PC-9 (cell line): ENCODE measurements at regions of chr11 and their contacts with region 1.

Region 1: DNA sequence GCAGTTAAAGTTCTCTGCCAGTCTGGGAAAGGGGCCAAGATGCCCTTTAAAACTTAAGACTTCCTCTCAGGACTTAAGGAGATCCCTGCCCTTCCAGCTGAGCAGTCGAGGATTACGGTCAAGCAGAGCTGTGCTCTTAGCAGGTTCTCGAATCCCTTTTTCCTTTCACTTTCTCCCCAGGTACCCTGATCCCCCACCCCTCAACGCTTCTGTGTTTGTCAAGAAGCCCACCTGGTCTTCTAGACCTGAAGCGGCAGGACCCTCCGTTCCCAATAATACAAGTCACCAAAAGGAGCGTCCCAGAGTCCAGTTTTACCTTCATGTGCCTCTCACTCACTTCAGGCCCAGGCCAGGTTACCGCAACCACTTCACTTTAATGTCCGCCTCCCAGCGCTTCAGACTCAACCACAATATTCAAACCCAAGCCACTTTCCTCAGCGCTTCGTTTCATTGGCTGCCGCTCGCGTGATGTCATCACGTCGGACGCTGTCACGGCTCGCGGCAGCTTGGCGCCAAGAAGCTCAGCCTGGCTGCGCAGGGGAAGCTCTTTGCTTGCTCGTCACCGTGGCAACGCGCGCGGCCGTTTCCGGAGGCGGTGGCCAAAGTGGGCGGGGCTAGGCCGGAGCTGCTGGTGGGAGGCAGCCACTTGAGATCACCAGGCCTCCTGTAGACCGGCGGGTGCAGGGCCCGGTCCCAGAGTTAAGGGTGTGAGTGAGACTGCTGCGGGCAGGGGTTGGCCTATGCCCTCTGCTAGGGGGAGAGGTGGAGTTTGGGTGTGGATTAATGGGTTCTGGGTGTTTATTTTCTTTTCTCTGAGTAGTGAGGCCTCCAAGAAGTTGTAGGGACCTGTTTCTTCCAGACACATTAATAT is at the starts of genes KIF18A and METTL15:
- DNase-seq: peak; percentile 97 to 99
- H3K4me3 ChIP-seq: peak within 1 kb of the TSS; percentile 93
- H3K27ac ChIP-seq: peak within 1 kb of the TSS; percentile 61
- H3K4me1 ChIP-seq: peaks cover 48% of the 10 kb centered on the region
- H3K27me3 ChIP-seq: no peaks in the 10 kb centered on the region
- CTCF ChIP-seq: no peak
- total RNA-seq, gene KIF18A: 22.9 and 31.1 TPM in 2 replicates
- total RNA-seq, gene METTL15: 17.9 and 19.9 TPM in 2 replicates

Region 2: DNA sequence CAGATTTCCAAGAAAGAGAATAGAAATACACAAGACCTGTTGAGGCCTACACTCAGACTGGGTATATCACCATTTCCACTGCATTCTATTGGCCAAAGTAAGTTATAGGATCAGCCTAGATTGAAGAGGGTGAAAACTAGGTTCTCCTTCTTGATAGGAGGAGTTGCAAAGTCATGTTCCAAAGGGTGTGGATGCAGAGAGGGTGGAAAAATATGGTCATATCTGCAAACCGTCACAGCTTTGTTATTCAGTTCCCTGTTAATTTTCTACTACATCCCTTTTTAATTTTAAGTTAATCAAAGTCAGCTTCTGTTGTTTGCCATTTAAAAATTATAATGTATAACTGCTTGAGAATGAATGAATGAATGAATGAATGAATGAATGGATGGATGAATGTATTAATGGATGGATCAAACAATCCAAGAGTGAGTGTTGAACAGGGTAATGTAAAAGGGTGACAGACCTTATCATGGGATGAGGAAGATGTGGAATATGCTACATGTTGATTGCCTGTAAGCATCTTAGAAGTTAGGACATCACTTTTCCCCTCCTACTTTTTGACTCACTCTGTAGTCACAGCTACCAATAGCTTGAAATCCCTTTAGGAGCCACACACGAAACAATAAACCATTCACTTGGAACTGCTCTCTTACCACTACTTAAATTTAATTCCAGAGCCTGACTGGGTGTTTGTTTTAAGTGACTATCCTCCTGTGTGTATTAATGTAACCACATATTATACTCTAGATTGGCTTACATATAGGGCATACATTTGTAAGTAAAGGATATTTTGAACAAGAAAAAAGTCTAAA is 866.5 kb before region 1 on chr11:
- CTCF ChIA-PET with region 1: no interaction called
- POLR2A ChIA-PET with region 1: no interaction called
- intact Hi-C with region 1: no loop called
- DNase-seq: no peak
- H3K4me3 ChIP-seq: no peak overlapping the region
- H3K27ac ChIP-seq: no peak overlapping the region
- H3K4me1 ChIP-seq: no peaks in the 10 kb centered on the region
- H3K27me3 ChIP-seq: no peaks in the 10 kb centered on the region
- CTCF ChIP-seq: no peak

Region 3: GRCh38 chr11:27362749-27363575 is 745.0 kb before region 1 on chr11 and contains the start of gene CCDC34:
- CTCF ChIA-PET with region 1: no interaction called
- POLR2A ChIA-PET with region 1: interaction called, 10 read pairs
- intact Hi-C with region 1: no loop called
- DNase-seq: peak; percentile 80 to 90
- H3K4me3 ChIP-seq: peak within 1 kb of the TSS; percentile 75
- H3K27ac ChIP-seq: peak within 1 kb of the TSS; percentile 13; the same call in 1 of the 2 replicates
- H3K4me1 ChIP-seq: peaks cover 24% of the 10 kb centered on the region; the same call in 1 of the 2 replicates
- H3K27me3 ChIP-seq: no peaks in the 10 kb centered on the region
- CTCF ChIP-seq: no peak
- total RNA-seq, gene CCDC34: 21.0 and 33.6 TPM in 2 replicates

Region 4: DNA sequence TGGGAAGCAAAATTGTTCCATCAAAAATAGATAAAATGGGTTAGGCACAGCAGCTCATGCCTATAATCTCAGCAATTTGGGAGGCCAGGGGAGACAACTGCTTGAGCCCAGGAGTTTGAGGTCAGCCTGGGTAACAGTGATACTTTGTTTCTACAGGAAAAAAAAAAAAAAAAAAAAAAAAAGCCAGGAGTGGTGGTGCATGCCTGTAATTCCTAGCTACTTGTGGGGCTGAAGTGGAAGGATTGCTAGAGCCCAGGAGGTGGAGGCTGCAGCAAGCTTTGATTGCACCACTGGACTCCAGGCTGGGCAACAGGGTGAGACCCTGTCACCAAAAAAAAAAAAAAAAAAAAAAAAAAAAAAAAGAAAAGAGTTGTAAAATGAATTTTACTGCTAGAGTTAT is 49.6 kb before region 1 on chr11:
- CTCF ChIA-PET with region 1: no interaction called
- POLR2A ChIA-PET with region 1: interaction called, 10 read pairs
- intact Hi-C with region 1: no loop called
- DNase-seq: no peak
- H3K4me3 ChIP-seq: no peak overlapping the region
- H3K27ac ChIP-seq: no peak overlapping the region
- H3K4me1 ChIP-seq: no peaks in the 10 kb centered on the region
- H3K27me3 ChIP-seq: no peaks in the 10 kb centered on the region
- CTCF ChIP-seq: no peak

Region 5: GRCh38 chr11:28144808-28145207 is 36.8 kb after region 1 on chr11:
- CTCF ChIA-PET with region 1: no interaction called
- POLR2A ChIA-PET with region 1: no interaction called
- intact Hi-C with region 1: loop called (anchors 1 kb)
- DNase-seq: no peak
- H3K4me3 ChIP-seq: no peak overlapping the region
- H3K27ac ChIP-seq: no peak overlapping the region
- H3K4me1 ChIP-seq: peaks cover 21% of the 10 kb centered on the region; the same call in 1 of the 2 replicates
- H3K27me3 ChIP-seq: no peaks in the 10 kb centered on the region
- CTCF ChIP-seq: no peak

Region 6: DNA sequence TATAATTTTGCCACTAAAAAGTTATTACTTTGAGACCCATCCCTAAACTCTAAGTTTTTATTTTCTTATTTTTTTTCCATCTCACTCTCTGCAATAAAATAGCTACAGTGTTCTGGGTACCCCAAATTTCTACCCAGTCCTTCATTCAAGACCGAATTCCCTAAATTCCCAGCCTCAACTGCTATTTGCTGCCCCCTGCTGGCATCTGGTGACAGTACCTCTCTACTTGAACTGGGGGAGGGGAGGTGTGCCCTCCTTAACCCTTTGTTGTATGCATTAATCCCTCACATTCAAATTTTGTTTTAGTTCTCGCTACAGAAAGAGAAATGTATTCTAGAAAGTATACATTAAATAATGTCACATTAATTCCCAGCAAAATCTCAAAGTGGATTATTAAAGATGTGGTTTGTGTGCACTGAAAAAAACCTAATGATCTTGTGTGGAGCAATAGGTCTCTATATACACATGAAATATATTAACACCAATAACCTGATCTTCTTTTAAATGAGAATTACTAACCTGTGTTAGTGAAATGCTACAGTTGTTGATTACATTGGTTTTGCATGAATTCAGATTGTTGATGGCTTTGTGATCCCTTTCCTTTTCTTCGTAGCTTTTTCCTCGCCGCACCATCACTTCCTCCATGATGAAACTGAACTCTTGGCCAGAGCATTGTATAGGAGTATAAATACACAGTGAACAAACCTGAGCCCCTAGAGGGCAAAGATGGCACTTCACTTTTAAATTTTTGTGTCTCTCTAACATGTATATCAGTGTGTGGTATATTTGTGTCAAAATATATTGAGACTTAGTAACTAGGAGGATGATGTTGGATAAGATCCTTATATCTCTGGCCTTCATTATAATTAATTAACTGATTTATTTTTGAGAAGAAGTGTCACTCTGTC is 590.2 kb after region 1 on chr11:
- CTCF ChIA-PET with region 1: no interaction called
- POLR2A ChIA-PET with region 1: no interaction called
- intact Hi-C with region 1: loop called (anchors 5 kb)
- DNase-seq: peak in 1 of 2 experiments; percentile 37
- H3K4me3 ChIP-seq: no peak overlapping the region
- H3K27ac ChIP-seq: no peak overlapping the region
- H3K4me1 ChIP-seq: peaks cover 24% of the 10 kb centered on the region
- H3K27me3 ChIP-seq: no peaks in the 10 kb centered on the region
- CTCF ChIP-seq: peak; percentile 81

Region 7: GRCh38 chr11:28963189-28963588 is 855.2 kb after region 1 on chr11:
- CTCF ChIA-PET with region 1: no interaction called
- POLR2A ChIA-PET with region 1: no interaction called
- intact Hi-C with region 1: no loop called
- DNase-seq: no peak
- H3K4me3 ChIP-seq: no peak overlapping the region
- H3K27ac ChIP-seq: no peak overlapping the region
- H3K4me1 ChIP-seq: no peaks in the 10 kb centered on the region
- H3K27me3 ChIP-seq: no peaks in the 10 kb centered on the region
- CTCF ChIP-seq: no peak

Region 8: DNA sequence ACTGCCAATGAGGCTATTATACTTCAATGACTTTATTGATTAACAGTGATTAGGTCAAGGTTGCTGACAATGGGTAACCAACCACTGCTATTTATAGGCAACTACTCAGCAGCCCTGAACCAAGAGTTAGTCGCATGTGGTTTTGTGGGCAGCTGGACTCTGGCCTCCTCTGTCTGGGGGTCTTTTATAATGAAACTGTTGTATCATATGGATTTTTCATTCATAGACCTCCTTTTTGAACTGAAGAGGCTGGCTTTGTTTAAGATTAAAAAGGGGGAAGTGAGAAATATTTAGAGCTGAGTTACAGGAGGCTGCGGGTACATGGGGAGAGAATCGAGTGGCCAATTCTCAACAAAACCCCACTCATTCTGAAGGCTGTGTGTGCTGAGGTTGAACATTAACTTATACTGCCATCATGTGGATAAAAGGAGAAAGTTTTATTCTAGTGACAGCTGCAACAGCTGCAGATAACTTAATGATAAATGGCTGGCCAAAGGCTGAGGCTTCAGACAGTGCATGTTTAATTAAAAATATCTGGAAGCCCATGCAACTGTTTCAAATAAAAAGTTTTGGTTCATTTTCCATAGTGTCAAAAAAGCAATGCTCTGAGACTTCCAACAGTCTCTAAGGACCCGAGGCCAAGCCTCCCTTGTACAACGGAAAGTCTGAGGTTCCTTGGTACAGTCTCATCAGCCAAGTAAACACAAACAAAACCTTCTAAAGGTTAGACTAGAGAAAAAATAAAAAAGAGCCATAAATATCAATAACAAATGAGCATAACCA is 1226.2 kb after region 1 on chr11:
- CTCF ChIA-PET with region 1: no interaction called
- POLR2A ChIA-PET with region 1: no interaction called
- intact Hi-C with region 1: loop called (anchors 10 kb)
- DNase-seq: no peak
- H3K4me3 ChIP-seq: no peak overlapping the region
- H3K27ac ChIP-seq: no peak overlapping the region
- H3K4me1 ChIP-seq: no peaks in the 10 kb centered on the region
- H3K27me3 ChIP-seq: peaks cover 4% of the 10 kb centered on the region
- CTCF ChIP-seq: peak; percentile 74